Breast epithelium (tissue), 4 donors: ENCODE measurements at regions of chr1 and their contacts with region 1.

Region 1: GRCh38 chr1:40332695-40333094 is 15.6 kb upstream of the COL9A2 start:
- DNase-seq: no peak
- H3K4me3 ChIP-seq: no peak overlapping the region
- H3K27ac ChIP-seq: no peak overlapping the region
- H3K4me1 ChIP-seq: no peaks in the 10 kb centered on the region
- H3K27me3 ChIP-seq: no peaks in the 10 kb centered on the region
- CTCF ChIP-seq: no peak
- POLR2A ChIP-seq: no peak

Region 2: DNA sequence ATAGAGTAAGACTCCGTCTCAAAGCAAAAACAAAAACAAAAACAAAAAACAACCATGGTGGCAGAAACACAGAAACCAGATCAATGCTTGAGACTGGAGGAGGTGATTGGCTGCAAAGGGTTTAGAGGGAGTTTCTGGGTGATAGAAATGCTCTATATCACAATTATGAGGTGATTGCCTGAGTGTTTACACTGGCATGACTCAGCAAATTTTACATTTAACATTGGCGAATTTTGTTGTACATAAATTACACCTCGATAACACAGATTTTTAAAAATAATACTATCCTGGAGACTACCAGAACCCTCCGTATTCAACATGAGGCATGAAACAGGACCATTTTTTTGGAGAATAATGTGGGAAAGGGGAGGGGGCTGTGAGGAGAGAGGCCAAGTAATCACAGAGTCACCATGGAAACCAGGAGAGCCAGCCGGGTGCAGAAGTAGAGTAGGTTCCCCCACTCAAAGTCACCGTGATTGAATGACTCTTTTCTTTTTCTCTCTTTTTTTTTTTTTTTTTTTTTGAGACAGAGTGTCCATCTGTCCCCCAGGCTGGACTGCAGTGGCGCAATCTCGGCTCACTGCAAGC is 717.5 kb before region 1 on chr1:
- intact Hi-C with region 1: loop called (anchors 5 kb)
- DNase-seq: no peak
- H3K4me3 ChIP-seq: no peak overlapping the region
- H3K27ac ChIP-seq: no peak overlapping the region
- H3K4me1 ChIP-seq: no peaks in the 10 kb centered on the region
- H3K27me3 ChIP-seq: no peaks in the 10 kb centered on the region
- CTCF ChIP-seq: no peak
- POLR2A ChIP-seq: no peak